ENCODE measurements at regions of chr13 and their contacts with region 1.

Region 1: GRCh38 chr13:51583875-51584730 is at the start of gene WDFY2:
- DNase-seq: peak; percentile 100
- H3K4me3 ChIP-seq: peak within 1 kb of the TSS; percentile 93
- H3K27ac ChIP-seq: peak within 1 kb of the TSS; percentile 94
- H3K4me1 ChIP-seq: peaks cover 20% of the 10 kb centered on the region
- H3K27me3 ChIP-seq: no peaks in the 10 kb centered on the region
- CTCF ChIP-seq: no peak
- total RNA-seq, gene WDFY2: 45.5 and 50.3 TPM in 2 replicates

Region 2: DNA sequence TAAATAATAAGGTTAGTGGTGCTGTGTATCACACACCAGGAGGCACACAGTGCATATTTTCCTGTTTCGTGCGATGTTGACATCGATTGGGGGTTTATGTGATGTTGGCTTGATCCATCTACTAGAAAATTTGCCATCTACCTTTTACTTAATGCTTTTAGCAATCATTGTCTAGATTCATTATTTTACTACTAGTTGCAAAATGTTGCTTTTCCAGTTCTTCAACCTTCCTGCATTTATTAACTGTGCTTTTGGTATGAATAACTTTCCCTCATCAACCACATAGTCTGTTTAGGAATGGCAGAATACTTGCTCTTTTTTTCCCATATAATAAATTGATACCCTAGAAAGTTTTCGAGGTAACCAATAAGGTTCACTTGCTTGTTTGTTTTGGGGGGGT is 490.5 kb before region 1 on chr13:
- CTCF ChIA-PET with region 1: no interaction called
- POLR2A ChIA-PET with region 1: no interaction called
- intact Hi-C with region 1: no loop called
- DNase-seq: no peak
- H3K4me3 ChIP-seq: no peak overlapping the region
- H3K27ac ChIP-seq: no peak overlapping the region
- H3K4me1 ChIP-seq: no peaks in the 10 kb centered on the region
- H3K27me3 ChIP-seq: no peaks in the 10 kb centered on the region
- CTCF ChIP-seq: no peak

Region 3: GRCh38 chr13:51452361-51453206 is 131.5 kb before region 1 on chr13 and contains the start of gene INTS6:
- CTCF ChIA-PET with region 1: no interaction called
- POLR2A ChIA-PET with region 1: interaction called, 4 read pairs
- intact Hi-C with region 1: loop called (anchors 1 kb)
- DNase-seq: peak; percentile 100
- H3K4me3 ChIP-seq: peak within 1 kb of the TSS; percentile 95
- H3K27ac ChIP-seq: peak within 1 kb of the TSS; percentile 99
- H3K4me1 ChIP-seq: peaks cover 35% of the 10 kb centered on the region
- H3K27me3 ChIP-seq: no peaks in the 10 kb centered on the region
- CTCF ChIP-seq: no peak
- total RNA-seq, gene INTS6: 86.2 and 90.4 TPM in 2 replicates

Region 4: GRCh38 chr13:51636349-51636890 is 52.3 kb after region 1 on chr13:
- CTCF ChIA-PET with region 1: no interaction called
- POLR2A ChIA-PET with region 1: no interaction called
- intact Hi-C with region 1: loop called (anchors 2 kb)
- DNase-seq: no peak
- H3K4me3 ChIP-seq: no peak overlapping the region
- H3K27ac ChIP-seq: peak overlapping the region; percentile 79
- H3K4me1 ChIP-seq: peaks cover 87% of the 10 kb centered on the region
- H3K27me3 ChIP-seq: no peaks in the 10 kb centered on the region
- CTCF ChIP-seq: no peak

Region 5: GRCh38 chr13:51759240-51759639 is 175.1 kb after region 1 on chr13:
- CTCF ChIA-PET with region 1: no interaction called
- POLR2A ChIA-PET with region 1: interaction called, 10 read pairs
- intact Hi-C with region 1: no loop called
- DNase-seq: no peak
- H3K4me3 ChIP-seq: no peak overlapping the region
- H3K27ac ChIP-seq: no peak overlapping the region
- H3K4me1 ChIP-seq: peaks cover 3% of the 10 kb centered on the region
- H3K27me3 ChIP-seq: no peaks in the 10 kb centered on the region
- CTCF ChIP-seq: no peak

Region 6: GRCh38 chr13:51781246-51782022 is 197.3 kb after region 1 on chr13:
- CTCF ChIA-PET with region 1: no interaction called
- POLR2A ChIA-PET with region 1: no interaction called
- intact Hi-C with region 1: loop called (anchors 5 kb)
- DNase-seq: peak; percentile 51
- H3K4me3 ChIP-seq: no peak overlapping the region
- H3K27ac ChIP-seq: no peak overlapping the region
- H3K4me1 ChIP-seq: peaks cover 23% of the 10 kb centered on the region
- H3K27me3 ChIP-seq: no peaks in the 10 kb centered on the region
- CTCF ChIP-seq: peak; percentile 63